ENCODE measurements at regions of chr14 and their contacts with region 1.

Region 1: DNA sequence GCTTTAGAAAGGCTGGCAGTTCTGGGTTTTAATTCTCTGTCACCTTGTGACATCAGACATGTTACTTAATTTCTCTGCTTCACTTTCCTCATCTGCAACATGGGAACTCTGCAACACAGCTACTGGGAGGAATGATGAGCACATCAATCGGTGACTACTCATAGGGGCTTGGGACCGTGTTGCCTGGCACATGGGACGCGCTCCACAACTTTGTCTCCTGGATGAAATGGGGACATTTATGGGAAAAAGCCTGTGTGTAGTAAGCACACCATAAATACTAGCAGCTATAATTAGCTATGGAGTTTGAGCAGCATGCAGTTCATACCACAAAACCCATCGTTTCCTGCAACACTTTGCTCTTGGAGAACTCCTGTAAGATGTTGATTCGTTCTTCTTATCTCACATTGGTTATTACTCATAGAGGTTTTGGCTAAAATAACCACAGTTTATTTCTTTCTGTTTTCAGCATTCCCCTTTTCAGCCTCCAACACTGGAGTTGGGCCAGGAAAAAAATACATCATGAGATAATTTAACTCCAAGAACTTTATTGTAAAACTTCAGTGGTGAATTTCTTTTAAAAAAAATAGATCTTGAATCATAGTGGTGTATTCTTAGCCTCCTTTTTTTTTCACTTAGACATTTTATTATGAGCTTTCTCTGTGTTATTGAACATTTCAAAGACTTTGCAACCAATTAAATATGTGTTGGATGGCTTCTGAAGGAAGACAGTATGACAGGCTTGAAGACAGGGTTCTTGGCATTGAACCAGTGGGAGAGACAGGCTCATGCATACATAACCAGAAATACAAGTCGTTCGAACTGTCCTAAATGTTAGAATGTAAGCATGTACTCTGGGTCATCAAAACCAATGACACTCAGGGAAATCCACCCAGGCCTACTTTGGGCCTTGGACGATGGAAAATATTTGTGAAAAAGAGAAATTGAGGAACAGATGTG is 72.7 kb downstream of the RIN3 start:
- DNase-seq: peak; percentile 45 to 83
- ATAC-seq: peak; percentile 50 to 73 (median 68)
- H3K4me3 ChIP-seq: no peak overlapping the region
- H3K4me3 Mint-ChIP-seq: peak overlapping the region; percentile 84
- H3K27ac ChIP-seq: peak overlapping the region; percentile 83
- H3K27ac Mint-ChIP-seq: peak overlapping the region; percentile 94 to 96
- H3K4me1 ChIP-seq: peaks cover 87% of the 10 kb centered on the region
- H3K4me1 Mint-ChIP-seq: peaks cover 91 to 97% of the 10 kb centered on the region in 2 donors
- H3K27me3 ChIP-seq: no peaks in the 10 kb centered on the region
- H3K27me3 Mint-ChIP-seq: no peaks in the 10 kb centered on the region
- CTCF ChIP-seq: no peak

Region 2: DNA sequence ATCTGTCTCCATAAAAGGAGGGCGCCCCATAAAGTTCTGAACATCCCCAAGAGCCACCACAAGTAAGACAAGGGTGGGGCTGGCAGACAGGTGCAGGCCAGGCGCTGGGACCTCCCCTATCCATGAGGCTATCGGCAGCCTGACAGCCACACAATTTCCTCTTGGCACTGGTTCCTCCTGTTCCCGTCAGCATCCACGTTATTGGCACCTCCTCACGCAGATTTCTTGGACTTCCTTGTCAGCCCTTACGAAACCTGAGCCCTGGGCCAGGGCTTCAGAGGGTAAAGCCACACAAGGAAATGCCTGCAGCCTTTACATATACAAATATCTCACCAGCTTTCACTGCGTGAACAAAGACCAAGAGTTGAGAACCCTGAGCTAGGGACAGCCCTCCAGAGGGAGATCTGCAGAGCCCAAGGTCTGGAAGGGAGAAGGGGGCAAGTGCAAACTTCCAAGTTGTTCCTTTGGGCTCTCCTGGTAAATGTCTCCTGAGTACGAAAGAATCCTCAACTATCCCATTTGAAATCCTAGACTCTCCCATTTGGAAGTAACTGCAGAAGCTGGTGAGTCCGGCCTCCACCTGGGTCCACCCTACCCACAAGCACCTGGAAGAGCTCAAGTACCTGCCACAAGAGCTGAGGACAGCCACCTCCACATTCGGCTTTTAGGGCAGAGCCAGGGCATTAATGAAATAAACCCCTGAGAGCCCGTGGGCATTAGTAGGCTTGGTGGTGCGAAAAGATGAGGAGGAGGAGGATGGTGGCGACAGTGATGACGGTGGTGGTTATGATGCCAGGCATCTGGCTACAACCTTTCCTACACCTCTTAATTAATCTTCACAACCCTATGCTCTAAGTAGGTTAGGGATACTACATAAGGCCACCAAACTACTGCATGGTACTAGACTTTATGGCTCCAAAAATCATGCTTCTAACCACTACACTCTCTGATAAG is 713.5 kb before region 1 on chr14:
- intact Hi-C with region 1: no loop called
- DNase-seq: peak in 1 of 2 donors; percentile 83
- ATAC-seq: peak in 2 of 3 donors; percentile 7 to 10
- H3K4me3 ChIP-seq: peak overlapping the region; percentile 11
- H3K4me3 Mint-ChIP-seq: peak overlapping the region; percentile 76
- H3K27ac ChIP-seq: peak overlapping the region; percentile 80
- H3K27ac Mint-ChIP-seq: peak overlapping the region; percentile 79 to 86
- H3K4me1 ChIP-seq: peaks cover 77% of the 10 kb centered on the region
- H3K4me1 Mint-ChIP-seq: peaks cover 65 to 70% of the 10 kb centered on the region in 2 donors
- H3K27me3 ChIP-seq: no peaks in the 10 kb centered on the region
- H3K27me3 Mint-ChIP-seq: no peaks in the 10 kb centered on the region
- CTCF ChIP-seq: no peak

Region 3: DNA sequence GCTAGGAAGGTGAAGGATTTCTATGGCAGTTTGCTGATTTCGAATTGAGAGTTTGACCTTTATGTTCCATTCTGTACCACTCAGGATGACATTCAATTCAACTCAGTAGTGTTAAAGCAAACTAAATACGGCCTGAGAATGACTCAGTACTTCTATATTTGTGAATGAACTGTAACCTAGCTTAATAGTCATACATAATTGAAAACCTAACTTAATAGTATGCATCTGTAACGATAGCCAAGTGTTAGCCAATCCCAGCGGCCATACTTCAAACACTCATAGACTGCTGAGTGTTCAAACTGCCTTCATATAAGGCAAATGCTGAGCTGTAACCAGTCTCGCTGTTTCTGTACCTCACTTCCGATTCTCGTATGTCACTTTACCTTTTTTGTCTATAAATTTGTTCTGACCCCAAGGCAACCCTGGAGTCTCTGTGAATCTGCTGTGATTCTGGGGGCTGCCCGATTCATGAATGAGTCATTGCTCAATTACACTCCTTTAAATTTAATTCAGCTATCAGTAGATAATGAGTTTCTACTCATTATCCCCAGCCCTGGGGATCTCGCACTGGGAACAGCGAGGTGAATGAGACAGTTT is 361.8 kb before region 1 on chr14:
- intact Hi-C with region 1: no loop called
- DNase-seq: no peak
- ATAC-seq: no peak
- H3K4me3 ChIP-seq: no peak overlapping the region
- H3K4me3 Mint-ChIP-seq: no peak overlapping the region
- H3K27ac ChIP-seq: no peak overlapping the region
- H3K27ac Mint-ChIP-seq: no peak overlapping the region
- H3K4me1 ChIP-seq: no peaks in the 10 kb centered on the region
- H3K4me1 Mint-ChIP-seq: no peaks in the 10 kb centered on the region
- H3K27me3 ChIP-seq: no peaks in the 10 kb centered on the region
- H3K27me3 Mint-ChIP-seq: peaks cover 10 to 36% of the 10 kb centered on the region in 2 donors
- CTCF ChIP-seq: no peak

Region 4: DNA sequence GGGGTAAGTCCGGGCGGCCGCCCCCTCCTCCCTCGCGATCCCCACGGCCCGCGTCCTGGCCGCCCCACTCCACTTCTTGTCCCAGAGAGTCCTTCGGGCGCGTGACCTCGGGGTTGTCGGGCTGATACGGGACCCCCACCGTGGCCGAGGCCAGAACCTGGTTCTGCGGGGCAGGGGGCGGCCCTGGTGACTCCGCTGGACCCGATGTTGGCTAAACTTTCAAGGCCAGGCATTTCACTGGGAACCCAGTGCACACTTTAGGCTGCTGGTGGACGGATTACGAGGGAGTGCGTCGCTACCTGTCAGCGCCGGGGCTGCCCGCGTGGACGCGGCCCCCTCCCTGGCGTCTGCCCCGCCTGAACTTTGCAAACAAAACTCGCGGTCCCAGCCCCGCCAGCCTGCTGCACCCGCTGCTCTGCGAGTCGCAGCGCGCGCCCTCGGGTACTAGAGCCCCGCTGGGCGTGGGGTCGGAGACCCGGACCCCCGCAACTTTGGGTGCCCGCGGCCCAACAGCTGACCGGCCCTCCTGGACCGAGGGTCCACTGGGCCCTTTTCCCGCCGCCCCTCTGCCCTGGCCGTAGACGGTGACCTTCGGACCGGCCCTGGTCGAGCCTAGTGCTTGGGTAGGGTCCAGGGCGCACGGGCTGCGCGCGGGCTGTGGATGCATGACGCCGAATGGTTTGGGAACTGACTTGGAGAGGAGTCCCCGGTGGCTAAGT is 72.1 kb before region 1 on chr14:
- intact Hi-C with region 1: loop called (anchors 2 kb)
- DNase-seq: peak; percentile 44 to 66
- ATAC-seq: peak; percentile 33 to 57 (median 37)
- H3K4me3 ChIP-seq: peak overlapping the region; percentile 92
- H3K4me3 Mint-ChIP-seq: peak overlapping the region; percentile 90
- H3K27ac ChIP-seq: peak overlapping the region; percentile 90
- H3K27ac Mint-ChIP-seq: peak overlapping the region; percentile 97 to 98
- H3K4me1 ChIP-seq: peaks cover 59% of the 10 kb centered on the region
- H3K4me1 Mint-ChIP-seq: peaks cover 49 to 63% of the 10 kb centered on the region in 2 donors
- H3K27me3 ChIP-seq: no peaks in the 10 kb centered on the region
- H3K27me3 Mint-ChIP-seq: no peaks in the 10 kb centered on the region
- CTCF ChIP-seq: no peak

Region 5: DNA sequence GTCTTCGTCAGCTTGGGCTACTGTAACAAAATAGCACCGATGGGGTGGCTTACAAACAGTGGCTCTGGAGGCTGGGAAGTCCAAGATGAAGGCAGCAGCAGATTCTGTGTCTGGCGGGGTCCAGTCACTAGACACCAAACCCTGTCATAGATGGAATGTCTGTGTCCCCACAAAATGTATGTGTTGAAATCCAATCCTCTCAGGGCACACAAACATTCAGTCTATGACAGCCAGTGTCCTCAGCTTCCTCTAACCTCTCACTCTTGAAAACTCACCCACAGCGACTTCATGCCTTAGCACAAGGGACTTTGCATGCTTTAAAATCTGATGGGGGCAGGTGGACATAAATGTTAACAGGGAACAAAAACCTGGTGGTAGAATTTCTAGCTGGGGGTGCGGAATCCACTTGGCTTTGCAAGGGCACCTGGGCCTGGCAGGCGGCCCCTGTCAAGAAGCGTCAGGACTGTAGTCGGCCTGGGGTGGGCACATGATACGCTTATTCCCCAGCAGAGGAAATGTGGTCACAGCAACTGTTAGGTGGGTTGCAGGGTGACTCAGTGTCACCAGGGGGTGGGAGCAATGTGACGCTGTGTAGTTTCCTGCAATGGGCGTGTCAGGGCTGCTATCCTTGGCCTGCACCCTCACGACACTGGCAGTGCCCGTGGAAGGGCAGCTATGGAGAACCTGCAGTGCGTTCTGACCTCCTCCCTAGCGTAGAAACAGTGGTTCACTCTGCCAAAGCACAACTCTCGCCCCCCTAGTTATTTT is 55.0 kb before region 1 on chr14:
- intact Hi-C with region 1: loop called (anchors 5 kb)
- DNase-seq: peak; percentile 86 to 91
- ATAC-seq: peak; percentile 76 to 93 (median 93)
- H3K4me3 ChIP-seq: no peak overlapping the region
- H3K4me3 Mint-ChIP-seq: peak overlapping the region; percentile 89
- H3K27ac ChIP-seq: peak overlapping the region; percentile 98
- H3K27ac Mint-ChIP-seq: peak overlapping the region; percentile 98 to 99
- H3K4me1 ChIP-seq: peaks cover 87% of the 10 kb centered on the region
- H3K4me1 Mint-ChIP-seq: peaks cover 75 to 92% of the 10 kb centered on the region in 2 donors
- H3K27me3 ChIP-seq: no peaks in the 10 kb centered on the region
- H3K27me3 Mint-ChIP-seq: no peaks in the 10 kb centered on the region
- CTCF ChIP-seq: no peak

Region 6: DNA sequence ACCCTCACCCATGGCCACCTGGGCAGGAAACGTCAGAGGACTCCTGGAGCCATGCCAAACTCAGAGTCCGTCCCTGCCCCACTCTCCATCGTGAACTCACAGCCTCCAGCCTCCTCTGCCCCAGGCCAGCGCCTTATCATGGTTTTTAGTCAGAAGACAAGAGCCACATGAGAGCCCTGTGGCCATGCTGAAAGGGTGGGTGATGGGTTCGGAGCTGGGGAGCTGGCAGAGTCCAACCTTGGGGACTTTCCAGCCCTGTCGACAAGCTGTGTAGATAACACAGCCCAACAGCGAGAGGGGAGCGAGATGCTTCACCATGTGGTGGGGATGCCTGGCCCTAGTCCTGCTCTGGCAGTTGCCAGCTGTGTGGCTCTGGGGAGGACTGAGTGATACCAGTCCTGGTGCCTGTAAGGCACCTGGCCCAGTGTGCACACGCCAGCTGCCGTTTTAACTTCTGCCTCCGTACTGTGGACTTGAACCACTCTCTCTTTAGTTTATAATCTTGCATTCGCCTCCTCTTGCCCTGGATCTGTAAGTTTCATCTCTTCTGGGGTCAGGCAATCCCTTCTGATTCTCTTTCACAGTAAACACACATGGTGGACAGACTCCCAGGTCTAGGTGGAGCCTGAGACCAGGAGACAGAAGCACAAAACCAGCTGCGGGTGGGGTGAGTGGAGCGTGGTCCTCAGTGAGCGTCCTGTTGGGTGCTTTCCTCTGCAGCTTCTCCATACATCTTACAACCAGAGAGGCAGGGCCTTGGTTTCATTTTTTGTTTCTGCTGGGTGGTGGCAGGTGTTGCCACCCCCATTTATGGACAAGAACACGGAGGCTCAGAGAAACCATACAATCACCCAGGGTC is 17.4 kb before region 1 on chr14:
- intact Hi-C with region 1: loop called (anchors 1 kb)
- DNase-seq: peak; percentile 69 to 82
- ATAC-seq: peak; percentile 83 to 94 (median 88)
- H3K4me3 ChIP-seq: no peak overlapping the region
- H3K4me3 Mint-ChIP-seq: peak overlapping the region; percentile 83
- H3K27ac ChIP-seq: peak overlapping the region; percentile 89
- H3K27ac Mint-ChIP-seq: peak overlapping the region; percentile 98
- H3K4me1 ChIP-seq: peaks cover 82% of the 10 kb centered on the region
- H3K4me1 Mint-ChIP-seq: peaks cover 65 to 76% of the 10 kb centered on the region in 2 donors
- H3K27me3 ChIP-seq: no peaks in the 10 kb centered on the region
- H3K27me3 Mint-ChIP-seq: no peaks in the 10 kb centered on the region
- CTCF ChIP-seq: no peak

Region 7: GRCh38 chr14:92603309-92604242 is 17.3 kb after region 1 on chr14:
- intact Hi-C with region 1: loop called (anchors 2 kb)
- DNase-seq: peak; percentile 49 to 83
- ATAC-seq: peak; percentile 69 to 76 (median 70)
- H3K4me3 ChIP-seq: no peak overlapping the region
- H3K4me3 Mint-ChIP-seq: peak overlapping the region; percentile 40
- H3K27ac ChIP-seq: peak overlapping the region; percentile 1
- H3K27ac Mint-ChIP-seq: peak overlapping the region; percentile 62 to 66
- H3K4me1 ChIP-seq: peaks cover 55% of the 10 kb centered on the region
- H3K4me1 Mint-ChIP-seq: peaks cover 43 to 67% of the 10 kb centered on the region in 2 donors
- H3K27me3 ChIP-seq: no peaks in the 10 kb centered on the region
- H3K27me3 Mint-ChIP-seq: no peaks in the 10 kb centered on the region
- CTCF ChIP-seq: peak; percentile 42

Region 8: GRCh38 chr14:92615451-92615850 is 29.2 kb after region 1 on chr14:
- intact Hi-C with region 1: loop called (anchors 2 kb)
- DNase-seq: peak; percentile 75 to 93
- ATAC-seq: peak; percentile 85 to 97 (median 93)
- H3K4me3 ChIP-seq: no peak overlapping the region
- H3K4me3 Mint-ChIP-seq: peak overlapping the region; percentile 87
- H3K27ac ChIP-seq: peak overlapping the region; percentile 99
- H3K27ac Mint-ChIP-seq: peak overlapping the region; percentile 97 to 100
- H3K4me1 ChIP-seq: peaks cover 63% of the 10 kb centered on the region
- H3K4me1 Mint-ChIP-seq: peaks cover 67 to 72% of the 10 kb centered on the region in 2 donors
- H3K27me3 ChIP-seq: no peaks in the 10 kb centered on the region
- H3K27me3 Mint-ChIP-seq: no peaks in the 10 kb centered on the region
- CTCF ChIP-seq: no peak

Region 9: DNA sequence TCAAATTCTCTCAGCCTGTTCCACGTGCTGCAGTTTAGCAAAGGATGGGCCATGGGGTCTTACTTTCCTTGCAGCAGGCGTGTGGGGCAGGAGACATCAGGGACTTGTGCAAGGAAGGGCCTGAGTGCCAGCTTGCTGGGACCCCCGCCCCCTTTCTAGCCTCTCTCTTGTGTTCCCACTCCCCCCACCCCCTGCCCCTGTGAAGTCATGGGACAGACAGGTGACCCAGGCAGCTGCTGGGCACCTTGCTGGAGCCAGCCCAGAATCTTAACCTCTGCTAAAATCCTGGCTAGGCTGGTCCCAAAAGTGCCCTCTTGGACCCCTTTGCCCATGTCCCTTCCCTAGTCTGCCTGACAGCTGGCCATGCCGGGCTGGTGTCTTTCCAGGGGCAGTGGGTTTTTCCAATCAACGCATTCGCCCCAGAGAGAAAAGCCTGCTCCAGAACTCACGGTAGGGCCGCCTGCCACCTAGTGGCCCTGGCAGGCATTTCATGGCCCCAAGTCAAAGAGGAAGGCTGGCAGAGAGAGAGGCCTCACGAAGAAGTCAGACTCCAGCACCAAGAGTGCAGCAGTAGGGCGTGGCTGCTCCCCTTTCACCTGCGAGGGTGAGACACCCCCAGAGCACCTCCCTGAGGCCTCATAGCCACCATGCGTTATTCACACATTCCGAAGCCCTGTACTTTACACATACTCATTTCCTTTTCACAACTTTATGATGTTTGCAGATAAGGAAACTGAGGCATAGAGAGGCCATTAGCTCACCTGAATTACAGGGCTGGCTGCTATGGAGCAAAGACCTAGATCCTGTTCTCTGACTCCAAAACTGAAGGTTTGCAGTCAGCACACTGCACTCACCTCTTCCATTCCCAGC is 94.8 kb after region 1 on chr14:
- intact Hi-C with region 1: loop called (anchors 2 kb)
- DNase-seq: peak; percentile 74 to 89
- ATAC-seq: peak; percentile 85 to 87 (median 87)
- H3K4me3 ChIP-seq: no peak overlapping the region
- H3K4me3 Mint-ChIP-seq: peak overlapping the region; percentile 42
- H3K27ac ChIP-seq: peak overlapping the region; percentile 69
- H3K27ac Mint-ChIP-seq: peak overlapping the region; percentile 91
- H3K4me1 ChIP-seq: peaks cover 43% of the 10 kb centered on the region
- H3K4me1 Mint-ChIP-seq: peaks cover 34 to 51% of the 10 kb centered on the region in 2 donors
- H3K27me3 ChIP-seq: no peaks in the 10 kb centered on the region
- H3K27me3 Mint-ChIP-seq: no peaks in the 10 kb centered on the region
- CTCF ChIP-seq: peak; percentile 87

Region 10: DNA sequence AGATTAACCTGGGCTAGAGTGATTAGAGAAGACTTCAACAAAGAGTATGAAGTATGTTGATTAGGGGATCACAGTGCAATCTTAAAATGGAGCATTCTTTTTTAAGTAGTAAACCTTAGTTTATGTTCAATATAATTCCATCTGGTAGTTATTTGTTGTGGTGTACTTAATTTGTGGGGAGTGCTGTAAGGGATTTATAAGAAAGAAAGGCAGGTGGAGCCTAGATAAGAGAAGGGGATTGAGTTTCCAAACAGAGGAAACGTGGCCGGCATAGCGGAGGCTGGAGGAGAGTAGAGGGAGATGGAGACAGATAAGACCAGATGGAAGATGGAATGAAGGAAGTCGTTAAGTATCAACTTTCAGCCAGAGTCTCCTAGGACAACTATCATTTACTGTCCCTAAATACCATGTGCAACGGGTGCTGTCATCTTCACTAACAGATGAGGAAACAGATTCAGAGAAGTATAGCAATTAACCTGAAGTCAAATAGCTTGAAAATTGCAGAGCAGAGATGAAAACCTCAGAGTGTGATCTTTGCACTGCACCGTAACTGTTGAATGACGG is 246.0 kb after region 1 on chr14:
- intact Hi-C with region 1: no loop called
- DNase-seq: no peak
- ATAC-seq: no peak
- H3K4me3 ChIP-seq: no peak overlapping the region
- H3K4me3 Mint-ChIP-seq: no peak overlapping the region
- H3K27ac ChIP-seq: no peak overlapping the region
- H3K27ac Mint-ChIP-seq: no peak overlapping the region
- H3K4me1 ChIP-seq: no peaks in the 10 kb centered on the region
- H3K4me1 Mint-ChIP-seq: peaks cover 5 to 6% of the 10 kb centered on the region in 2 donors
- H3K27me3 ChIP-seq: no peaks in the 10 kb centered on the region
- H3K27me3 Mint-ChIP-seq: no peaks in the 10 kb centered on the region
- CTCF ChIP-seq: no peak